ENCODE measurements at regions of chr9 and their contacts with region 1.

Region 1: DNA sequence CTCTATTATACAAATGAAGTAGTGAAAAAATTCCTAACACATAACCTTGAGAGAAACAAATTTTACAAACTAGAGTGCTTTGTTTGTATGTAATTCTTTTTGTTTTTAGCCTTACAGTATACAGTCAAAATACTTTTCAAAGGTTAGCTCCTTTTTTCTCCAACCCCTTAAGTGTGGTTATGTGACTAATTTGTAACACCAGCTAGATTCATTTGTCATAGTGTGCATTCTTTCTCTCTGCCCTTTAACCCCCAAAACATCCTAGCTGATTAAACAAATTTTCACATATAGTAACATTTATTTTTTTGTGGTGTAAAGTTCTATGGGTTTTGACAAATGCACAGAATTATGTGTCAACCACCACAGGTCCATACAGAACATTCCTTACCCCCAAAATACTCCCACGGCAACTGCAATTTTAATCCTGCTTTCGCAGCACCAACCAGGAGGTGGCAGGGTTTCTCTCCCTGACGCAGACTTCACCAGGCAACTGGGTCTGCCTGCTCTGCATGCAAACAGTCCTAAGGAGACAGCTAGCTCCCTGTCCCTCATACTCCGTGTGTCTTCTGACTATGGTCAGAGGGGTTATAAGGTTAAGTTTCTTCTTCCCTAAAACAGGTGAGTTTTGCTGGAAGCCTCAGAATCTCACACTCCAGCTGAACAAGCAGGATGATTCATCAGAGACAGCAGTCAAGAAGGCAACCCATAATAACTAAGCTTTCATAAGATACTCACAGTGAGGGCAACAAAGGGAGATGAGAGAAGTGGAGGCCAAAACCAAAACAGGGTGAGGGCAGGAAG is 44.5 kb upstream of the NR5A1 start:
- DNase-seq: peak; percentile 53
- ATAC-seq: peak; percentile 94
- H3K4me3 ChIP-seq: no peak overlapping the region
- H3K27ac ChIP-seq: no peak overlapping the region
- H3K4me1 ChIP-seq: peaks cover 11% of the 10 kb centered on the region
- H3K27me3 ChIP-seq: no peaks in the 10 kb centered on the region; a peak in 1 of 5 replicates
- CTCF ChIP-seq: peak; percentile 87
- EP300 ChIP-seq: no peak
- POLR2A ChIP-seq: no peak
- RAD21 ChIP-seq: peak; percentile 88

Region 2: DNA sequence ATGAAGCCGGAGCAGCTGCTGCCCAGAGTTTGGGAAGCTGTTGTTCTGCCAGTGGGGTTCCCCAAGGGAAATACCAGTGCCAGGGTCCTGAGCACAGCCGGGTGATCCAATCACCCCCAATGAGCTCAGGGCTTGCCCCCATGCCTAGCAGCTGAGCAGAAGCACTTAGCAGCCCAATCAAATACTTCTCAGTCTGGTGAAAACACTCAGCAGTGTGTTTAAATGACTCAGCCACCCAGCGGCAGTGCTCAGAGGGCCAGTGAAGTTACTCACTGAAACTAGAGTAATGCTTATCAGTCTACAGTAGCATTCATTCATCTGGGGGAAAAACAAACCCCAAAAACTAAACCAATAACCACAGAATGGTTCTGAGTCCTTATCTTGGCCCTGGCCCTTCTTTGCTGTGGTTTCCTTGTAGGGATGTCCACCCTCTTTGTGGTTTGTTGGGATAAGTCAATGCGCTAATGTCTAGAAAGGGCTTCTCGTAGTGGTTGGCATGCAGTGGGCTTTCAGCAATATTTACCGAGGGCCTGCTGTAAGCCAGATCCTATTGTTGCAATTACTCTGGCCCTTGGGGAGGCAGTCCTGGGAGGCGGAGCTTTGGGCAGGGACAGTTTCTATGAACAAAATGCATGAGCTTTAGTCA is 497.0 kb before region 1 on chr9:
- CTCF ChIA-PET with region 1: no interaction called
- POLR2A ChIA-PET with region 1: no interaction called
- in situ Hi-C with region 1: no loop called
- intact Hi-C with region 1: no loop called
- DNase-seq: peak; percentile 26
- ATAC-seq: peak; percentile 60; the same call in 2 of the 3 replicates
- H3K4me3 ChIP-seq: no peak overlapping the region
- H3K27ac ChIP-seq: no peak overlapping the region
- H3K4me1 ChIP-seq: no peaks in the 10 kb centered on the region
- H3K27me3 ChIP-seq: peaks cover 0 to 17% of the 10 kb centered on the region in 2 experiments; a peak in 2 of 5 replicates
- CTCF ChIP-seq: no peak
- EP300 ChIP-seq: no peak
- POLR2A ChIP-seq: no peak
- RAD21 ChIP-seq: no peak

Region 3: GRCh38 chr9:124617471-124618141 is 65.9 kb after region 1 on chr9:
- CTCF ChIA-PET with region 1: interaction called, 16 read pairs
- POLR2A ChIA-PET with region 1: interaction called, 3 read pairs
- in situ Hi-C with region 1: no loop called
- intact Hi-C with region 1: loop called (anchors 1 kb)
- DNase-seq: peak; percentile 66
- ATAC-seq: peak; percentile 94
- H3K4me3 ChIP-seq: no peak overlapping the region
- H3K27ac ChIP-seq: no peak overlapping the region
- H3K4me1 ChIP-seq: peaks cover 23% of the 10 kb centered on the region
- H3K27me3 ChIP-seq: no peaks in the 10 kb centered on the region
- CTCF ChIP-seq: peak; percentile 92
- EP300 ChIP-seq: no peak
- POLR2A ChIP-seq: no peak
- RAD21 ChIP-seq: peak; percentile 93

Measured in HepG2 (cell line).